Activated naive CD4-positive, alpha-beta T cell treated with anti-CD3 and anti-CD28 coated beads for 36 hours (primary cell): ENCODE measurements at regions of chr14 and their contacts with region 1.

Region 1: GRCh38 chr14:73851644-73852382 is at the start of gene PTGR2:
- DNase-seq: peak; percentile 91
- H3K4me3 Mint-ChIP-seq: peak within 1 kb of the TSS; percentile 92
- H3K27ac Mint-ChIP-seq: peak within 1 kb of the TSS; percentile 96
- H3K4me1 Mint-ChIP-seq: peaks cover 20% of the 10 kb centered on the region
- H3K27me3 Mint-ChIP-seq: no peaks in the 10 kb centered on the region
- total RNA-seq, gene PTGR2: 10.7 to 14.1 TPM

Region 2: DNA sequence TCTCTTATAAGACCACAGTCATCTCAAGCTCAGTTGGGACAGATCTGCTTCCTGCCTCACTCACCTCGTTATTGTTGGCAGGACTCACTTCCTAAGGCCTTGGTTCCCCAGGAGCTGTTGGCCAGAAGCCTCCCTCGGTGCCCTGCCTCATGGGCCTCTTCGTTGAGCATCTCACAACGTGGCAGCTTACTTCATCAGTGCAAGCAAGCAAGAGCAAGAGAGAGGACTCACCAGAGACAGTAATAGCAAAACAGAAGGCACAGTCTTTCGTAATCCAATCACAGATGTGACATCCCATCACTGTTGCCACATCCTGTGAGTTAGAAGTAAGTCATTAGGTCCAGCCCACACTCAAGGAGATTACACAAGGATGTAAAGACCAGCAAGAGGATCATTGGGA is 388.4 kb before region 1 on chr14:
- CTCF ChIA-PET with region 1: no interaction called
- intact Hi-C with region 1: no loop called
- DNase-seq: peak; percentile 72
- H3K4me3 Mint-ChIP-seq: peak overlapping the region; percentile 32
- H3K27ac Mint-ChIP-seq: peak overlapping the region; percentile 52
- H3K4me1 Mint-ChIP-seq: peaks cover 52% of the 10 kb centered on the region
- H3K27me3 Mint-ChIP-seq: no peaks in the 10 kb centered on the region

Region 3: GRCh38 chr14:73886449-73887317 is 34.9 kb after region 1 on chr14 and contains the start of gene ZNF410:
- CTCF ChIA-PET with region 1: interaction called, 4 read pairs
- intact Hi-C with region 1: loop called (anchors 1 kb)
- DNase-seq: peak; percentile 95
- H3K4me3 Mint-ChIP-seq: peak within 1 kb of the TSS; percentile 88
- H3K27ac Mint-ChIP-seq: peak within 1 kb of the TSS; percentile 94
- H3K4me1 Mint-ChIP-seq: peaks cover 46% of the 10 kb centered on the region
- H3K27me3 Mint-ChIP-seq: no peaks in the 10 kb centered on the region
- total RNA-seq, gene ZNF410: 51.0 to 56.8 TPM